ENCODE measurements at regions of chr10 and their contacts with region 1.

Region 1: GRCh38 chr10:5293691-5294550 is 70.8 kb upstream of the UCN3 start:
- DNase-seq: peak; percentile 73
- H3K4me3 Mint-ChIP-seq: peak overlapping the region; percentile 93
- H3K27ac Mint-ChIP-seq: peak overlapping the region; percentile 100
- H3K4me1 Mint-ChIP-seq: peaks cover 82% of the 10 kb centered on the region
- H3K27me3 Mint-ChIP-seq: no peaks in the 10 kb centered on the region

Region 2: DNA sequence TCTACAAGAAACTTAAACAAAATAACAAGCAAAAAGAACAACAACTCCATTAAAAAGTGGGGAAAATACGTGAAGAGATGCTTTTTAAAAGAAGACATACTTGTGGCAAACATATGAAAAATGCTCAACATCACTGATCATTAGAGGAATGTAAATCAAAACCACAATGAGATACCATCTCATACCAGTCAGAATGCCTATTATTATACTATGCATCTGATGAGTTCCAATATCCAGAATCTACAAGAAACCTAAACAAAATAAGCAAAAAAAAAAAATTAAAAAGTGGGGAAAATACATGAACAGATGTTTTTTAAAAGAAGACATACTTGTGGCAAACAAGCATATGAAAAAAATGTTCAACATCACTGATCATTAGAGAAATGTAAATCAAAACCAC is 229.3 kb before region 1 on chr10:
- intact Hi-C with region 1: no loop called
- DNase-seq: no peak
- H3K4me3 Mint-ChIP-seq: no peak overlapping the region
- H3K27ac Mint-ChIP-seq: no peak overlapping the region
- H3K4me1 Mint-ChIP-seq: no peaks in the 10 kb centered on the region
- H3K27me3 Mint-ChIP-seq: peaks cover 3% of the 10 kb centered on the region

Region 3: GRCh38 chr10:5317547-5318107 is 23.7 kb after region 1 on chr10:
- intact Hi-C with region 1: loop called (anchors 1 kb)
- DNase-seq: peak; percentile 60
- H3K4me3 Mint-ChIP-seq: peak overlapping the region; percentile 5
- H3K27ac Mint-ChIP-seq: peak overlapping the region; percentile 71
- H3K4me1 Mint-ChIP-seq: peaks cover 50% of the 10 kb centered on the region
- H3K27me3 Mint-ChIP-seq: no peaks in the 10 kb centered on the region

Region 4: DNA sequence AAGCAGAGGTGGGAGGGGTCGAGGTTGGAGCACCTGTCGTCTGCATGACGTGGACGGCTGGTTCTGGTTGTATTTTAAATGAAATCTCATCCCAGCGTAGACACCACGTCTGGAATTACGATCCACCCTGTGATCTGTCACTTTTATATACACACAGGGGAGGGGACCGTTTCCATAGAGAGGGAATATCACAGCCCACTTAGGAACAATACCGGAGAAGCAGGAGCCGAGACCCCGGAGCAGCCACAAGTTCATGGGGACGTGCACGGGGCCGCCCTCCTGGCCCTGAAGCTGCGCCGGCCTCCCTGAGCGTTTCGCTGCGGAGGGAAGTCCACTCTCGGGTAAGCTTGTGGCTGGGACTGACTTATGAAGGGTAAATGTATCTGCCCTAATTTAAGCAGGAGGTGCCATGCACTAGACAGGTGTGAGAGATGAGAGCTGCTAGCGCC is 71.0 kb after region 1 on chr10 and contains the start of gene UCN3:
- intact Hi-C with region 1: no loop called
- DNase-seq: no peak
- H3K4me3 Mint-ChIP-seq: no peak within 1 kb of the TSS
- H3K27ac Mint-ChIP-seq: no peak within 1 kb of the TSS
- H3K4me1 Mint-ChIP-seq: peaks cover 7% of the 10 kb centered on the region
- H3K27me3 Mint-ChIP-seq: peaks cover 24% of the 10 kb centered on the region
- total RNA-seq, gene UCN3: not detected in 2 replicates

Region 5: GRCh38 chr10:5412277-5412941 is 118.5 kb after region 1 on chr10 and contains the start of gene NET1:
- intact Hi-C with region 1: loop called (anchors 2 kb)
- DNase-seq: peak; percentile 70
- H3K4me3 Mint-ChIP-seq: peak within 1 kb of the TSS; percentile 86
- H3K27ac Mint-ChIP-seq: peak within 1 kb of the TSS; percentile 59
- H3K4me1 Mint-ChIP-seq: peaks cover 5% of the 10 kb centered on the region
- H3K27me3 Mint-ChIP-seq: peaks cover 18% of the 10 kb centered on the region
- total RNA-seq, gene NET1: 37.2 and 40.3 TPM in 2 replicates

Region 6: DNA sequence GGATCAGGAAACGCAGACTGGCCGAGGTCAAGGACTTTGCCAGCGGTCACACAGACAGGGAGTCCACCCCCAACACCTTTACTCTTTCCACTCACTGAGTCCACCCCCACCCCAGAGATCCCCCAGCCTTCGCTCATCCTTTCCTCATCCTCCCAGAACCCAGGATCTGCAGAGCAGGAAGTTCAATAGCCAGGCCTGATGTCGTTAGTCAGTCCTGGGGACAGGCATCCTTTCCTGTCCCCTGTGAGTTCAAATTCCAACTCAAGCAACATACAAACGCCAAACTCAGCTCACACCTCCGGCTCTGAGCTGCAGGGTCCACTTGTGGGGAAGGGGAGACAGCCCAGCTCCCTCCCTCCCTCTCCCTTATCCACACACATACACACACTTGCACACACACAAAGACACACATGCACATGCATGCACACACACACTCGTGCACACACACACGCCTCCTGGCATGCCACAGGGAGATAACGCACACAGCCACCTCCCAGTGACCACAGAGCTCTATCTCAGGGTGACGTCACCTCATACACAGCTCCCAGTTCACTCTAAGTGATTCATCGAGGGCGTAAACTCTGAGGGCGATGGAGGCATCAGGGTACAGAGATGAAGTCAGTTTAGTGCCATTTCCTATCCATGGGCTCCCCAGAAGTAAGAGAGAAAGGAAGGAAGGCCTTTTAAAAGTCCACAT is 254.8 kb after region 1 on chr10:
- intact Hi-C with region 1: loop called (anchors 1 kb)
- DNase-seq: peak; percentile 51
- H3K4me3 Mint-ChIP-seq: no peak overlapping the region
- H3K27ac Mint-ChIP-seq: no peak overlapping the region
- H3K4me1 Mint-ChIP-seq: peaks cover 28% of the 10 kb centered on the region
- H3K27me3 Mint-ChIP-seq: peaks cover 4% of the 10 kb centered on the region

Measured in activated T-helper 1 cell treated with anti-CD3 and anti-CD28 coated beads, Interleukin-12 subunit alpha, Interleukin-12 subunit beta, Interleukin-2, Interleukin-4 antibody, amounts not matched to agents 30 ng/mL and 10 ng/mL and 1 ng/mL, durations not matched to agents 14 hours and 24 hours and 36 hours (primary cell).